ENCODE measurements at regions of chr19 and their contacts with region 1.

Region 1: DNA sequence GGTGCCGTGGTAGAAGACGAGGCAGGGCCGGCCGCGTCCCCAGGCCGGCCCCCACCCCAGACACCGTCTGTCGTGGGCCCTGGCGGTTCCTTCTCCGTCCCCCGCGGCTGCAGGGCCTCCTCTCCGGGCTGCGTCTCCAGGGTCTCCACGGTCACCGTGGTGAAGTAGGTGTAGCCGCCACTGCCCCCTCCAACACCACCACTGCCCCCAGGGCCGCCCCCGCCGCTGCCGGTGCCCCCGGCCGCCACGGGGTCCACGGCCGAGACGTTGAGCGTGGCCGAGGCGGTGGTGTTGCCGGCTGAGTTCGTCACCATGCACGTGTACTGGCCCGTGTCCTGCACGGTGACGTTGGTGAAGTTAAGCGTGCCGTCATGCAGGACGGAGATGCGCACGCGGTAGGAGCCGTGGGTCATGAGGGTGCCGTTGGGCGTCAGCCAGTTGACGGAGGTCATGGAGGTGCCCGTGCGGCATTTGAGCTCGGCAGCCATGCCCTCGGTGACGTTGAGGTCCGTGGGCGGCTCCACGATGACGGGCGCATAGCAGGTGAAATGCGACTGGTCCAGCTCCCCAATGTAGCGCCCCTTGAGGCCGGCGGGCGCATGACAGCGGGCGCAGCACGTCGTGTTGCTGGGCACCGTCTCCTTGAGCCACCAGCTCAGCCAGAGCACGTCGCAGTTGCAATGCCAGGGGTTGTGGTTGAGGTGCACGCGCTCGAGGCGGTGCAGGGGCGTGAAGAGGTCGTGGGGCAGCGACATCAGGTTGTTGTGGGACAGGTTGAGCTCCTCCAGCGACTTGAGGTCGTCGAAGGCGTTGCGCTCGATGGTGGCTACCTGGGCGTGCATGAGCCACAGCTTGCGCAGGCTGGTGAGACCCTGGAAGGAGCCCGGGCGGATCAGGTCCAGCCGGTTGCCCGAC is 4.6 kb upstream of the ASPDH start:
- DNase-seq: peak; percentile 73
- ATAC-seq: peak; percentile 72
- H3K4me3 Mint-ChIP-seq: no peak overlapping the region
- H3K27ac Mint-ChIP-seq: no peak overlapping the region
- H3K4me1 Mint-ChIP-seq: 0 out of 2 replicates have a peak, but pooled peaks cover 1% of the 10 kb centered on the region
- H3K27me3 Mint-ChIP-seq: peaks cover 21% of the 10 kb centered on the region
- CTCF ChIP-seq: peak; percentile 59

Region 2: GRCh38 chr19:50486823-50487511 is 31.4 kb before region 1 on chr19:
- CTCF ChIA-PET with region 1: interaction called, 10 read pairs
- POLR2A ChIA-PET with region 1: no interaction called
- DNase-seq: peak; percentile 93
- ATAC-seq: peak; percentile 60
- H3K4me3 Mint-ChIP-seq: no peak overlapping the region
- H3K27ac Mint-ChIP-seq: no peak overlapping the region
- H3K4me1 Mint-ChIP-seq: peaks cover 35% of the 10 kb centered on the region
- H3K27me3 Mint-ChIP-seq: peaks cover 71% of the 10 kb centered on the region
- CTCF ChIP-seq: peak; percentile 93

Region 3: DNA sequence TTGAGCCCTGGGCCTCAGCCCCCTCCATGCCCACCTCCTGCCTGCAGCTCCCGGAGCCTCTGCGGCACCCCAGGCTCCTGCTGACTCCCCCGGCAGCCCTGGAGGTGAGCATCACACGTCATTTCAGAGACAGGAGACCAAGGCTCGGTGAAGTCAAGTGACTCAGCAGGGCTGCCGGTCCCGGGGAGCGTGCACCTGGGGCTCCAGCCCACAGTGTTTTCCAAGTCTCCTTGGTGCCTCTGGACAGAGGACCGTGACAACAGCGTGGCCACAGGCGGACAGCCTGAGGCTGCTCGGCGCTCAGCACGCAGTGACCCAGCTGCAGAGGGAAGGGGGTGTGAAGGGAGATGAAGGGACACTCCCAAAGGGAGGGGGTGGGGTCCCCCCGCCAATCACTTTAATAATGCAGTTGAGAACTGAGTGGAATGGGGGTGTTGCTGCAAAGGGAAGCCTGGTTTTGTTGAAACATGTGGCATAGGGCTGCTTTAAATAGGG is 12.8 kb after region 1 on chr19:
- CTCF ChIA-PET with region 1: interaction called, 55 read pairs
- POLR2A ChIA-PET with region 1: no interaction called
- DNase-seq: no peak
- ATAC-seq: no peak
- H3K4me3 Mint-ChIP-seq: no peak overlapping the region
- H3K27ac Mint-ChIP-seq: no peak overlapping the region
- H3K4me1 Mint-ChIP-seq: 0 out of 2 replicates have a peak, but pooled peaks cover 2% of the 10 kb centered on the region
- H3K27me3 Mint-ChIP-seq: peaks cover 27% of the 10 kb centered on the region
- CTCF ChIP-seq: no peak